CD4-positive, alpha-beta T cell (primary cell): ENCODE measurements at regions of chr3 and their contacts with region 1.

Region 1: GRCh38 chr3:53677413-53677812 is 168.8 kb downstream of the CHDH start:
- DNase-seq: no peak
- ATAC-seq: no peak
- H3K4me3 ChIP-seq: no peak overlapping the region
- H3K4me3 Mint-ChIP-seq: no peak overlapping the region
- H3K27ac ChIP-seq: no peak overlapping the region
- H3K27ac Mint-ChIP-seq: no peak overlapping the region
- H3K4me1 ChIP-seq: no peaks in the 10 kb centered on the region
- H3K4me1 Mint-ChIP-seq: no peaks in the 10 kb centered on the region
- H3K27me3 ChIP-seq: peaks cover 2 to 17% of the 10 kb centered on the region in 2 experiments
- H3K27me3 Mint-ChIP-seq: peaks cover 68% of the 10 kb centered on the region
- CTCF ChIP-seq: no peak

Region 2: GRCh38 chr3:53721187-53722119 is 44.0 kb after region 1 on chr3:
- CTCF ChIA-PET with region 1: no interaction called
- POLR2A ChIA-PET with region 1: no interaction called
- intact Hi-C with region 1: no loop called
- DNase-seq: peak in 1 of 14 experiments; percentile 23
- ATAC-seq: no peak
- H3K4me3 ChIP-seq: no peak overlapping the region
- H3K4me3 Mint-ChIP-seq: no peak overlapping the region
- H3K27ac ChIP-seq: no peak overlapping the region
- H3K27ac Mint-ChIP-seq: no peak overlapping the region
- H3K4me1 ChIP-seq: no peaks in the 10 kb centered on the region
- H3K4me1 Mint-ChIP-seq: no peaks in the 10 kb centered on the region
- H3K27me3 ChIP-seq: no peaks in the 10 kb centered on the region
- H3K27me3 Mint-ChIP-seq: peaks cover 30% of the 10 kb centered on the region
- CTCF ChIP-seq: no peak

Region 3: GRCh38 chr3:53921296-53921695 is 243.9 kb after region 1 on chr3:
- CTCF ChIA-PET with region 1: no interaction called
- POLR2A ChIA-PET with region 1: no interaction called
- intact Hi-C with region 1: loop called in 1 of 2 experiments (anchors 10 kb)
- DNase-seq: peak in 3 of 14 experiments; percentile 19 to 49 (median 34)
- ATAC-seq: no peak
- H3K4me3 ChIP-seq: no peak overlapping the region
- H3K4me3 Mint-ChIP-seq: no peak overlapping the region
- H3K27ac ChIP-seq: no peak overlapping the region
- H3K27ac Mint-ChIP-seq: no peak overlapping the region
- H3K4me1 ChIP-seq: no peaks in the 10 kb centered on the region
- H3K4me1 Mint-ChIP-seq: no peaks in the 10 kb centered on the region
- H3K27me3 ChIP-seq: peaks cover 3 to 6% of the 10 kb centered on the region in 2 experiments
- H3K27me3 Mint-ChIP-seq: peaks cover 37% of the 10 kb centered on the region
- CTCF ChIP-seq: no peak